Activated T-helper 1 cell treated with anti-CD3 and anti-CD28 coated beads, Interleukin-12 subunit alpha, Interleukin-12 subunit beta, Interleukin-2, Interleukin-4 antibody, amounts not matched to agents 30 ng/mL and 10 ng/mL and 1 ng/mL, durations not matched to agents 14 hours and 24 hours and 36 hours (primary cell): ENCODE measurements at regions of chr1 and their contacts with region 1.

Region 1: DNA sequence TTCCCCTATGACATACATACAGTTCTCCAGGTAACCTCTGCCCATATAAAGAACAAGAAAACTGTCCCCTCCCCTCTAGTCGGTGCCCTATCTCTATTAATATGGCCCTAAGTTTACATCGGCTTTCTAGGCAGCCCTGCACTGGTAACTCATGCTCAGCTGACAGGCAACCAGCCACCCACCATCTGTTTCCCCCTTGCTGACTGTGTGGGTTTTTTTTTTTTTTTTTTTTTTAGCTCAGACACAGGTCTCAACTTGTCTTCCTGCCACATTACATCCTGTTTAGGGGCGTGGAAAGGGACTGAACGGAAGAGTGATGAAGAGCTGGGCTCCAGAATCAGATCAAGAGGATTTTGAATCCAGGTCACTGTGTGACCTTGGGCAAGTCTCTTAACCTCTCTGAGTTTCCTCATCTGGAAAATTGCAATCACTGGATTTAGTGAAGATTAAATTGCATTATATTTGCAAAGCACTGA is 14.0 kb downstream of the LAPTM5 start:
- DNase-seq: peak; percentile 68
- H3K4me3 Mint-ChIP-seq: peak overlapping the region; percentile 64
- H3K27ac Mint-ChIP-seq: peak overlapping the region; percentile 98
- H3K4me1 Mint-ChIP-seq: peaks cover 96% of the 10 kb centered on the region
- H3K27me3 Mint-ChIP-seq: no peaks in the 10 kb centered on the region

Region 2: DNA sequence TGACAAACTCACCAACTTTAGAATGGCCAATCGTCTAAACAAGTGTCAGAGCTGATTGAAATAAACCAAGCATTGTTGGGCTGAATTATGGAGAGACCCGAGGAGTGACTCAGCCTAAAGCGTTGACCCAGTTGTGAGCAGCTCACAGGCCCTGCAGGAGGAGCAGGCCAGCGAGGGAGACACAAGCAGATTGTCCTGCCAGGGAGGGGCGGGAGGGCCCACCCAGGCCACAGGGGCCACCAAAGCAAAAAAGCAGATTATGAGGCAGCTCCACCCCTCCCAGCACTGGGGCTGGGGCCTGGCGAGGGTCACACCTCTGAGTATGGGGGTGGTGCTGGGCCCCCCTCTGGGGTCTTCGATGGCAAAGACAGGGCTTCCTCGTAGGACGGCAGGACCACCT is 10.1 kb before region 1 on chr1:
- intact Hi-C with region 1: loop called (anchors 1 kb)
- DNase-seq: no peak
- H3K4me3 Mint-ChIP-seq: no peak overlapping the region
- H3K27ac Mint-ChIP-seq: no peak overlapping the region
- H3K4me1 Mint-ChIP-seq: peaks cover 21% of the 10 kb centered on the region
- H3K27me3 Mint-ChIP-seq: no peaks in the 10 kb centered on the region

Region 3: DNA sequence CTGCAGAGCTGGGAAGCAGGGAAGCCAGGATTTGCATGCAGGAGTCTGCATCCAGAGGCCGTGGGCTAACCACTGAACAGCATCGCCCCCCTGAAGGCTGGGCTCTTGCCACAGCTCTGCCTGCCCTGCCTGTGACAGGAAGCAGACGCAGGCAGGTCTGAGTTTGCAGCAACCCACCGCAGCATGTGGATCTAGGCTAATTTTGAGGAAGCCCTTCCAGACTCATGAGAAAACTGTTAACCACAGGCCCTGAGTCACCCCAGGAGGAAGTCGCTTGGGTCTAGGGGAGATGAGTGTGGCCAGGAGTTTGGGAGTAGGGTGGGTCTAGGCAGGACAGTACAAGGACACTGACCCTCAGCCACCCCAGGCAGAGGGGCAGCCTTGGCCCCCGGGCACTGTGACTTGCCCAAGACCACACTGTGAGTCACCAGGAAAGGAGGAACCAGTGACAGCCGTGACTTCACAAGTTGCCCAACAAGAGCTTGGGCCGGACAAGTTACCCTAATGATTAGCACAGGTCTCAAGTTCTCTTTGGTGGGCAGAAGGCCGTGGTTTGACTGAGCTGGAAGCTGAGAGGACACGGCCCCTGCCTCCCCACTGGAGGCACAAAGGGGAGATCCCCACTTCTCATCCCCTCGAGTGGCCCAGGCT is 13.0 kb after region 1 on chr1:
- intact Hi-C with region 1: loop called (anchors 1 kb)
- DNase-seq: peak; percentile 64
- H3K4me3 Mint-ChIP-seq: peak overlapping the region; percentile 99
- H3K27ac Mint-ChIP-seq: peak overlapping the region; percentile 97
- H3K4me1 Mint-ChIP-seq: peaks cover 99% of the 10 kb centered on the region
- H3K27me3 Mint-ChIP-seq: no peaks in the 10 kb centered on the region

Region 4: GRCh38 chr1:31762726-31763670 is 1019.4 kb after region 1 on chr1:
- intact Hi-C with region 1: loop called (anchors 5 kb)
- DNase-seq: peak; percentile 42
- H3K4me3 Mint-ChIP-seq: peak overlapping the region; percentile 65
- H3K27ac Mint-ChIP-seq: no peak overlapping the region
- H3K4me1 Mint-ChIP-seq: peaks cover 25% of the 10 kb centered on the region
- H3K27me3 Mint-ChIP-seq: peaks cover 60% of the 10 kb centered on the region